ENCODE measurements at regions of chr5 and their contacts with region 1.

Region 1: GRCh38 chr5:80191991-80192398 is 63.9 kb downstream of the SERINC5 start:
- DNase-seq: peak in 3 of 5 donors; percentile 50 to 75 (median 68)
- H3K4me3 ChIP-seq: peak overlapping the region; percentile 19
- H3K4me3 Mint-ChIP-seq: peak overlapping the region; percentile 69 to 85 (median 74)
- H3K27ac ChIP-seq: peak overlapping the region; percentile 5
- H3K27ac Mint-ChIP-seq: peak overlapping the region; percentile 80 to 95 (median 92)
- H3K4me1 ChIP-seq: peaks cover 84% of the 10 kb centered on the region
- H3K4me1 Mint-ChIP-seq: peaks cover 74 to 90% (median 86%) of the 10 kb centered on the region in 3 donors
- H3K27me3 ChIP-seq: no peaks in the 10 kb centered on the region
- H3K27me3 Mint-ChIP-seq: no peaks in the 10 kb centered on the region

Region 2: GRCh38 chr5:80181618-80182211 is 10.3 kb before region 1 on chr5:
- CTCF ChIA-PET with region 1: interaction called, 11 read pairs
- POLR2A ChIA-PET with region 1: interaction called, 9 read pairs
- DNase-seq: peak in 4 of 5 donors; percentile 45 to 79 (median 76)
- H3K4me3 ChIP-seq: no peak overlapping the region
- H3K4me3 Mint-ChIP-seq: peak overlapping the region; percentile 13 to 75 (median 57)
- H3K27ac ChIP-seq: no peak overlapping the region
- H3K27ac Mint-ChIP-seq: peak overlapping the region; percentile 77 to 97 (median 90)
- H3K4me1 ChIP-seq: peaks cover 85% of the 10 kb centered on the region
- H3K4me1 Mint-ChIP-seq: peaks cover 76 to 90% (median 90%) of the 10 kb centered on the region in 3 donors
- H3K27me3 ChIP-seq: no peaks in the 10 kb centered on the region
- H3K27me3 Mint-ChIP-seq: peaks cover 0 to 2% of the 10 kb centered on the region in 2 donors

Region 3: DNA sequence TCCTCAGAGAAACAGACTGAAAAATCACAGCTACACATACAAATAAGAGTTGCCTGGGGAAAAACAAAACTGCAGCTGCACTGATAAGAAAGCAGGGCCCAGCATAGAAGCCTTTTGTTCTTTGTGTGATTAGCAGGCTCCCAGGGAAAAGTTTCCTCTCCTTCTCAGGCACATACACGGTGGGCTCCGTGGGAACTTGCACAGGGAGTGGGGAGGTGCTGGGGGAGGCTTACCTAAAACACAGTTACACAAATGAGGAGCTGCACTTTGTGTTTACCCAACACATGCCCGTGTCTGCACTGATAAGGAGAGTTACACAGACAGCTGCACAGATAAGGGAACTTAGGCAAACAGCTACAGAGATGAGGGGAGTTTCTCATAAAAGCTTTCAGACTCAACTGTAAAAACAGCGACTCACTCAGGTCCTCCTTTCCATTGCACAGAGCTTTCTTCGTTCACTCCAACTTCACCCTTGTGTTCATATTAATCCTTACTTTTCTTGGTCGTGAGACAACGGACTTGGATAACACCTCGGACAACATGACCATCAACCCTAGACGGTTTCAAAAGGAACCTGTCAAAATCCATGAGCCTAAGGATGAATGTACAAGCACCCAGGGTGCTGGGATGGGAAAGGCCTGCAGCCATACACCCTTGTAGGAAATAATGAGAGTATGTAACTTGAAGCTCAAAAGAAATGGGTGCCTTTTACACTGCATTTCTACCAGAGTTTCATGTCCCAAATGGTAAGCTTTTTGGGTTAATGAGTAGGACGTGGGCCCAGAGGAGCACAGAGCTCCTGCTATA is 13.0 kb after region 1 on chr5:
- CTCF ChIA-PET with region 1: interaction called, 11 read pairs
- POLR2A ChIA-PET with region 1: interaction called, 4 read pairs
- DNase-seq: no peak
- H3K4me3 ChIP-seq: no peak overlapping the region
- H3K4me3 Mint-ChIP-seq: peak overlapping the region in 4 of 7 donors; percentile 19 to 50 (median 34)
- H3K27ac ChIP-seq: no peak overlapping the region
- H3K27ac Mint-ChIP-seq: peak overlapping the region in 7 of 8 donors; percentile 35 to 85 (median 70)
- H3K4me1 ChIP-seq: peaks cover 70% of the 10 kb centered on the region
- H3K4me1 Mint-ChIP-seq: peaks cover 64 to 93% (median 69%) of the 10 kb centered on the region in 3 donors
- H3K27me3 ChIP-seq: no peaks in the 10 kb centered on the region
- H3K27me3 Mint-ChIP-seq: no peaks in the 10 kb centered on the region

Region 4: GRCh38 chr5:80289320-80289719 is 97.3 kb after region 1 on chr5:
- CTCF ChIA-PET with region 1: no interaction called
- POLR2A ChIA-PET with region 1: no interaction called
- DNase-seq: no peak
- H3K4me3 ChIP-seq: no peak overlapping the region
- H3K4me3 Mint-ChIP-seq: no peak overlapping the region
- H3K27ac ChIP-seq: no peak overlapping the region
- H3K27ac Mint-ChIP-seq: no peak overlapping the region
- H3K4me1 ChIP-seq: peaks cover 4% of the 10 kb centered on the region
- H3K4me1 Mint-ChIP-seq: peaks cover 4 to 10% (median 9%) of the 10 kb centered on the region in 3 donors
- H3K27me3 ChIP-seq: no peaks in the 10 kb centered on the region
- H3K27me3 Mint-ChIP-seq: peaks cover 0 to 5% of the 10 kb centered on the region in 2 donors

Region 5: DNA sequence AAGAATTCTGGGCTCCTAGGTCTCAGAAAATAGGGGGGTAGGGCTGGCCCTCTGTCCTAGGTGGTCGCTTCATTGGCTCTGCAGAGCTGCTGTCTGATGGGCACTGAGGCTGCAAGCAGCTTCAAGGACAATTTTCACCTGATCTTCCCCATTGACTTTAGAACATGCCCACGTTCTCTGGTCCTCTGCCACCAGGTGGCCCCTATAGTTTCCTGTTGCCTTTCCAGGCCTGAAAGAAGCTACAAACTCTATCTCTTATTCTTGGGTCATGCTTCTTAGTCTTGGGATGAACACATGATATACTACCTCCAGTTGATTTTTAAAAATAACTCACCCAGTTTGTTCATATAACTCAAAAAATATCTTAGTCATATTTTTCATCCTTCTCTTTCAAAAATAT is 154.1 kb after region 1 on chr5:
- CTCF ChIA-PET with region 1: no interaction called
- POLR2A ChIA-PET with region 1: no interaction called
- DNase-seq: peak in 4 of 5 donors; percentile 2 to 52 (median 16)
- H3K4me3 ChIP-seq: no peak overlapping the region
- H3K4me3 Mint-ChIP-seq: no peak overlapping the region
- H3K27ac ChIP-seq: no peak overlapping the region
- H3K27ac Mint-ChIP-seq: peak overlapping the region in 1 of 8 donors; percentile 6
- H3K4me1 ChIP-seq: no peaks in the 10 kb centered on the region
- H3K4me1 Mint-ChIP-seq: peaks cover 0 to 3% (median 0%) of the 10 kb centered on the region in 3 donors
- H3K27me3 ChIP-seq: no peaks in the 10 kb centered on the region
- H3K27me3 Mint-ChIP-seq: peaks cover 4 to 9% of the 10 kb centered on the region in 2 donors

Measured in CD8-positive, alpha-beta memory T cell (primary cell).